Activated T-helper 2 cell treated with anti-CD3 and anti-CD28 coated beads, Interferon-gamma antibody, Interleukin-2, Interleukin-4, amounts not matched to agents 10 μg/mL and 5 μg/mL and 100 μg/mL, durations not matched to agents 14 hours and 24 hours and 36 hours (primary cell): ENCODE measurements at regions of chr18 and their contacts with region 1.

Region 1: GRCh38 chr18:34912010-34912721 is 129.0 kb upstream of the MAPRE2 start:
- DNase-seq: no peak
- H3K4me3 Mint-ChIP-seq: no peak overlapping the region
- H3K27ac Mint-ChIP-seq: no peak overlapping the region
- H3K4me1 Mint-ChIP-seq: no peaks in the 10 kb centered on the region
- H3K27me3 Mint-ChIP-seq: no peaks in the 10 kb centered on the region

Region 2: DNA sequence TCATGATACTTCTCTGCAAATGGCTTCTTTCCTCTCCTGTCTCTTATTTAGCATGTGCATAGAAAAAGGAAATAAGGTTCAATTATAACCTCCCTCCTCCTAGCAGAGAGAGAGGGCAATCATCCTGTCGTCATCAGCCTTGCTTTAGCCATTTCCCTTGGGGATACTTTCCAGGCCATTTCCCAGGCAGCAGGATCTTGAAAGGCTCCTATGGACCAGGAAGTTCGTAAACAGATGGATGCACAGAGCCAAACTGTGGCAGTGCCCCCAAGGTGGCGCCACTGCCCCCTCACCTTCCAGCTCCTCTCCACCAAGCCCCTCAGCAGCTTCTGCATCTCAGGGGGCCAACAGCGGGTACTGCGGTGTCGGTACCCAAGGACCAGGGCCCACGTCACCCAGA is 44.6 kb before region 1 on chr18:
- intact Hi-C with region 1: loop called (anchors 2 kb)
- DNase-seq: no peak
- H3K4me3 Mint-ChIP-seq: no peak overlapping the region
- H3K27ac Mint-ChIP-seq: no peak overlapping the region
- H3K4me1 Mint-ChIP-seq: peaks cover 34% of the 10 kb centered on the region
- H3K27me3 Mint-ChIP-seq: peaks cover 12% of the 10 kb centered on the region

Region 3: GRCh38 chr18:34976899-34977837 is 65.0 kb after region 1 on chr18:
- intact Hi-C with region 1: loop called (anchors 5 kb)
- DNase-seq: peak; percentile 62
- H3K4me3 Mint-ChIP-seq: peak overlapping the region; percentile 81
- H3K27ac Mint-ChIP-seq: no peak overlapping the region
- H3K4me1 Mint-ChIP-seq: peaks cover 25% of the 10 kb centered on the region
- H3K27me3 Mint-ChIP-seq: peaks cover 37% of the 10 kb centered on the region

Region 4: GRCh38 chr18:34985963-34986362 is 73.8 kb after region 1 on chr18:
- intact Hi-C with region 1: loop called (anchors 2 kb)
- DNase-seq: no peak
- H3K4me3 Mint-ChIP-seq: no peak overlapping the region
- H3K27ac Mint-ChIP-seq: no peak overlapping the region
- H3K4me1 Mint-ChIP-seq: no peaks in the 10 kb centered on the region
- H3K27me3 Mint-ChIP-seq: peaks cover 14% of the 10 kb centered on the region